ENCODE measurements at regions of chr3 and their contacts with region 1.

Region 1: DNA sequence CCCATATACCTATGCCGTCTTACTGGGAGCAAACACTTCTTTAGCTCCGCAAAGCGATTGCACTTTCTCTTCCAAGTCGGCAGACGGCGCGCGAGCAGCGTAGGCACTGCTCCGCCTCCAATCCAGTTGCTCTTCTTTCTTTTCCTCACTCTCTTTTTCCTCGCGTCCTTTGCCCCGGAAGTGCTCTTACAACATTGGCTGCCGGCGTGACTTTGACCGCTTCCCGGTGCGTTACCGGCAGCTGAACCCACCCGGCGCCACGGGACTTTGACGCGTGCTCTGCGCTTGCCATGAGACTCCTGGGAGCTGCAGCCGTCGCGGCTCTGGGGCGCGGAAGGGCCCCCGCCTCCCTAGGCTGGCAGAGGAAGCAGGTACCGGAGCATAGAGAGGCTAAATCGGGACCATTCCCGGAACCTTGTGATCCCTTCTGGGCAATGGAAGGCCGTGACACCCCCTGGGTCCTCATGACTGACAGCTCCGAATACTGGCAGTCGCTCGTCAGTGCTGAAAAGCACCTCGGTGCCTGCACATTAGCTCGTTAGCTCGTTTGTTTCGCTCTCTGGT is at the start of gene GFM1:
- DNase-seq: peak; percentile 73 to 95 (median 87)
- ATAC-seq: peak; percentile 94 to 98 (median 96)
- H3K4me3 ChIP-seq: peak within 1 kb of the TSS; percentile 74 to 99
- H3K4me3 Mint-ChIP-seq: peak within 1 kb of the TSS; percentile 89 to 97 (median 96)
- H3K27ac ChIP-seq: peak within 1 kb of the TSS; percentile 40
- H3K27ac Mint-ChIP-seq: peak within 1 kb of the TSS; percentile 88 to 94
- H3K4me1 ChIP-seq: peaks cover 6 to 19% of the 10 kb centered on the region in 2 experiments
- H3K4me1 Mint-ChIP-seq: peaks cover 38 to 53% (median 48%) of the 10 kb centered on the region in 3 donors
- H3K27me3 ChIP-seq: no peaks in the 10 kb centered on the region
- H3K27me3 Mint-ChIP-seq: no peaks in the 10 kb centered on the region
- total RNA-seq, gene GFM1: 39.0 to 46.8 (median 40.1) TPM

Region 2: GRCh38 chr3:157159762-157160657 is 1484.4 kb before region 1 on chr3 and contains the start of gene CCNL1:
- CTCF ChIA-PET with region 1: no interaction called
- POLR2A ChIA-PET with region 1: interaction called in 1 of 2 experiments, 12 read pairs
- DNase-seq: peak; percentile 90 to 99 (median 95)
- ATAC-seq: peak; percentile 76 to 83 (median 82)
- H3K4me3 ChIP-seq: peak within 1 kb of the TSS; percentile 95 to 99
- H3K4me3 Mint-ChIP-seq: peak within 1 kb of the TSS; percentile 87 to 99 (median 93)
- H3K27ac ChIP-seq: peak within 1 kb of the TSS; percentile 98
- H3K27ac Mint-ChIP-seq: peak within 1 kb of the TSS; percentile 99 to 100
- H3K4me1 ChIP-seq: peaks cover 21 to 47% of the 10 kb centered on the region in 2 experiments
- H3K4me1 Mint-ChIP-seq: peaks cover 50 to 55% (median 54%) of the 10 kb centered on the region in 3 donors
- H3K27me3 ChIP-seq: no peaks in the 10 kb centered on the region
- H3K27me3 Mint-ChIP-seq: no peaks in the 10 kb centered on the region
- total RNA-seq, gene CCNL1: 271 to 1,140 (median 276) TPM

Region 3: GRCh38 chr3:158213459-158213858 is 431.0 kb before region 1 on chr3:
- CTCF ChIA-PET with region 1: no interaction called
- POLR2A ChIA-PET with region 1: interaction called in 1 of 2 experiments, 12 read pairs
- DNase-seq: no peak
- ATAC-seq: no peak
- H3K4me3 ChIP-seq: no peak overlapping the region
- H3K4me3 Mint-ChIP-seq: no peak overlapping the region
- H3K27ac ChIP-seq: no peak overlapping the region
- H3K27ac Mint-ChIP-seq: no peak overlapping the region
- H3K4me1 ChIP-seq: no peaks in the 10 kb centered on the region
- H3K4me1 Mint-ChIP-seq: peaks cover 0 to 8% (median 3%) of the 10 kb centered on the region in 3 donors
- H3K27me3 ChIP-seq: no peaks in the 10 kb centered on the region
- H3K27me3 Mint-ChIP-seq: no peaks in the 10 kb centered on the region

Region 4: DNA sequence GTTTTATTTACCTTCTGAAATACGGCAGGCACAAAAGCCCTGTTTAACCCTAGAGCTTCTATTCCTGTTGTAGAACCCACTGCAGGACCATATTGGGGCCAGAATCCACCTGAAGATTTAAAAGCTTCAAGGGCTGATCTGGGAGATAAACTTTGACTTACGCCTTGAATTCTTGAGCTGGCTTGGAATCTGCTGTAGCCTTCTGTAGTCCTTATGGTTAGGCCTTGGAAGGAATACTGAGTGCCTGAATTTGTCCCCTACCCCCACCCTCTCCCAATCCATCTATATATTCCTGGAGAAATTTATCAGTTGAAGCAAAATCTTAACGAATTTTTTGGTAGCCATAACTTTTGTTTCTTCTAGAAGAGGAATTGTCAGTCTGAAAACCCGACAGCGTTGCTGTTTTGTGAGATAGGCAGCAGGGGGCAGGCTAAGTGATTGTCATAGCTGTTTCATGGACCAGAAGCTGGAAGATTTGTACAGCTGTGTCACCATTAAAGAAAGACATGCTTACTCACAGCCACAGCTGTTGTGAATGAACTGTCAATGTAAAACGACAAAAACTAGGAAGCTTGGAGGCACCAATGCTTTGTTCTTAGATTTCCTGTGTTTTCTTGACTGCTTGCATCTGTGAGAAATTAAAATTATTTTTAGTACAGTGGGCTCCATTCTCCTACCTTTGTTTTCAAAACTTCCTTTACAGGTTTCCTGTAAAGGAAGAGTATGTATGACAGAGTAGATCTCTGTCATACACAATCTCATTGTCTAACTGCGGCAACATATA is 15.2 kb after region 1 on chr3:
- CTCF ChIA-PET with region 1: interaction called, 22 to 59 read pairs
- POLR2A ChIA-PET with region 1: interaction called in 1 of 2 experiments, 3 read pairs
- DNase-seq: peak in 31 of 35 experiments; percentile 6 to 64 (median 35)
- ATAC-seq: peak; percentile 54 to 69 (median 68)
- H3K4me3 ChIP-seq: no peak overlapping the region
- H3K4me3 Mint-ChIP-seq: no peak overlapping the region
- H3K27ac ChIP-seq: no peak overlapping the region
- H3K27ac Mint-ChIP-seq: peak overlapping the region in 1 of 2 donors; percentile 28
- H3K4me1 ChIP-seq: no peaks in the 10 kb centered on the region
- H3K4me1 Mint-ChIP-seq: peaks cover 0 to 7% (median 5%) of the 10 kb centered on the region in 3 donors
- H3K27me3 ChIP-seq: no peaks in the 10 kb centered on the region
- H3K27me3 Mint-ChIP-seq: no peaks in the 10 kb centered on the region

Region 5: DNA sequence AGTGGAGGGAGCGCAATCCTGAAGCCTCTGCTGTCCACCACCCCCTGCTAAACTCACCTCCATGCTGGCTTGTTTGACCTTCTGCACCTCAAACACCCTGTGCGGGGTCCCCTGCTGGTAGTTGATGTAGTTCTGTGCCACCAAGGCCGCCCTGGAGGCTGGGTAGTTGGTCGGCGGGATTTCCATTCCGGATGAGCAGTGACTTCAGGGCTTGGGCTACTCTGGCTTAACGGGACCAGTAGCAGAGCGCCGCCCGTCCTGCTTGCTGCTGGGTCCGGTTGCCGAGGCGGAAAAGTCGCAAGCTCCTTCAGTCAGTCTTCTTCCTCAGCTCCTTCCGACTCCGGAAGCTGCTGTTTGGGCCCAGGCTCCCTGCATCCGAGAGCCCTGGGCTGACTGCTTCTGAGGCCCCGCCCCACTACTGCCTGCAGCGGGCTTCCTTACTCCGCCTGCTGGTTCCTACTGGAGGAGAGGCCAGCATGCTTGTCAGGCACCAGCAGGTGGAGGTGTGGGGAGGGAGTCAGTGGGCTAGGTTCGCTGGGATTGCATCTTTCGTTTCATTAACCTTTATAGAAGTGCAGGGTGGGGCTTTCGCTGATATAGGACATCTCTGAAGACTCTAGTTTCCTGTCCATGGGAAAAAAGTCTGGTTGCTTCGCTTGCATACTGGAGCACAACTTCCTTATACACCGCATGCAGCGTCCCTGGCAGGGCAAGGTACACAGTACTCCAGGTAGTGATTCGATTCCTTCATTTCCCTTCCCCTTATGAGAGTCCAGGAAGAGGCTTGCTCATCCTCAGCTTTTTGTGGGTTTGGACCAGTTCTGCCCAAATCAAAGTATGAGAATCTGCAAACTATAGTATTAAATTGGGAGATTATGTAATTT is 28.1 kb after region 1 on chr3 and contains the start of gene LXN:
- CTCF ChIA-PET with region 1: interaction called, 3 to 10 read pairs
- POLR2A ChIA-PET with region 1: interaction called in 1 of 2 experiments, 3 read pairs
- DNase-seq: peak; percentile 58 to 85 (median 74)
- ATAC-seq: peak; percentile 98 to 99 (median 99)
- H3K4me3 ChIP-seq: peak within 1 kb of the TSS; percentile 62 to 87
- H3K4me3 Mint-ChIP-seq: peak within 1 kb of the TSS; percentile 92 to 95 (median 93)
- H3K27ac ChIP-seq: peak within 1 kb of the TSS; percentile 47
- H3K27ac Mint-ChIP-seq: peak within 1 kb of the TSS; percentile 85 to 91
- H3K4me1 ChIP-seq: peaks cover 9 to 12% of the 10 kb centered on the region in 2 experiments
- H3K4me1 Mint-ChIP-seq: peaks cover 27 to 34% (median 28%) of the 10 kb centered on the region in 3 donors
- H3K27me3 ChIP-seq: no peaks in the 10 kb centered on the region
- H3K27me3 Mint-ChIP-seq: no peaks in the 10 kb centered on the region
- total RNA-seq, gene LXN: 2.5 to 6.7 (median 3.9) TPM

Region 6: DNA sequence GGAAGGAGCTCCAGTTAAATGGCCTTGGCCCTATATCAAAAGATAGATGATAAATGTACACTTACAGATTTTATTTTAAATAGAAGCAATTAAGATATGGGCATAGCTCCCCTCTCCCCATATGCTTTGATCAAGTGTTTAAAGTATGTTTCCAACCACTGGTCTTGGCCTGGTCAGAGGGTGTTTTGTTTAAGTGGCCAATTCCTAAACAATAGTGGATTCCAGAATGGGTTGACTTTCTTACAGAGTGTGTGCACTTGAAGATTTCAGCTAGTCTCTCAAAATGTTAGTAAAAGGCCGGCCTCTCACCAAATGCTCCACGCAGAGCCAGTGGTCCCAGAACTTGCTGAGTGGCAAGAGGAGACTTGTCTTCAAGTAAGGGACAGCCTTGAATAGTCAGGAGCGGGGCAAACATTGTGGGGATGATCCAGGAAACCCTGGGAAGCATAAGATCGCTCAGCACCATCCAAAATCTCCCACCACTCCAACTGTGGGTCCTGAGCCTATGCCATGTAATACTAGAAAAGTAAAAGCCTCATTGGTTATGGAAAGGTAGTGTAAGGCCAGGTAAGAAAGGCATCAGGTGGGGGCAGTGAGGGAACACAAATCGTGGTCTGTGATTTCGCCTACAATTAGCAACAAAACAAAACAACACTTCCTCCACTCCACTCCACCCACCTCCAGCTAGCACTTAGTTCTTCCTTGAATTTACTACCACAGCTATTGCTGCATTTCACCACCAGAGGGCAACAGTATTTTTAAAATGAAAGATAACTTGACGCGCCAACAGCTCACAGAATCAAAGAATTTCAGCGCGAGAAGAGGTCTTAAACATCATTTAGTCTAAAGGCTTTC is 83.0 kb after region 1 on chr3:
- CTCF ChIA-PET with region 1: interaction called, 3 to 11 read pairs
- POLR2A ChIA-PET with region 1: interaction called in 1 of 2 experiments, 3 read pairs
- DNase-seq: peak in 30 of 35 experiments; percentile 10 to 76 (median 34)
- ATAC-seq: peak; percentile 63 to 73 (median 70)
- H3K4me3 ChIP-seq: peak overlapping the region in 1 of 2 donors; percentile 8
- H3K4me3 Mint-ChIP-seq: peak overlapping the region; percentile 22 to 47 (median 41)
- H3K27ac ChIP-seq: no peak overlapping the region
- H3K27ac Mint-ChIP-seq: peak overlapping the region; percentile 55 to 68
- H3K4me1 ChIP-seq: peaks cover 5 to 25% of the 10 kb centered on the region in 2 experiments
- H3K4me1 Mint-ChIP-seq: peaks cover 39 to 57% (median 45%) of the 10 kb centered on the region in 3 donors
- H3K27me3 ChIP-seq: peaks cover 0 to 20% of the 10 kb centered on the region in 2 experiments
- H3K27me3 Mint-ChIP-seq: peaks cover 5 to 7% of the 10 kb centered on the region in 2 donors

Region 7: DNA sequence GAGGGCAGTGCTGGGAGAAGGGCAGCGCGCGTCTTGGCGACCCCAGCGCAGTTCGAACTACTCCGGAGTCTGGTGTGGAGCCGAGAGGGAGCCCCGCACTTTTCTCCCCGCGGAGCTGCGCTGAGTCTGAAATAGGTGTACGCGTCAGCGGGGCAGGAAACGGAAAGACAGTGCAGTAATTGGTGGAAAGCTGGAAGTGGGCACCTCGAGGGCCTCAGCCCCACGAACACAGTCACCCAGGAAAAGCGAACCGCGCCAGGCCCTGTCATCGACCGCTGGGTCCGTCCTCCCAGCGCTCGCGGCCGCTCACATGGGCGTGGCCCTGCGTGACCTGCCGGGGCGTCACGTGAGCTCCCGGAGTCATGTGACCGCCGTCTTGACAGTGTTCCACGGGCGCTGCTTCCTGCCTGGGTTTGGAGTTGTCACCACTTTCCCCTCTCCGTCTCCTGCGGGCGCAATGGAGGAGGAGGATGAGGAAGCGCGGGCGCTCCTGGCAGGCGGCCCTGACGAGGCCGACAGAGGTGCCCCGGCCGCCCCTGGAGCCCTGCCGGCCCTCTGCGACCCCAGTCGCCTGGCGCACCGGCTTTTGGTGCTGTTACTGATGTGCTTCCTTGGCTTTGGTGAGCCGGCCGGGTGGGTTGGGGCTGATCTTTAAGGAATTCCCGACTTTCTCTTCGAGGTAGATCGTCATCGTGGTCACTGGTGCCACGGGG is 157.4 kb after region 1 on chr3 and contains the start of gene MFSD1:
- CTCF ChIA-PET with region 1: interaction called, 4 to 16 read pairs
- POLR2A ChIA-PET with region 1: interaction called in 1 of 2 experiments, 6 read pairs
- DNase-seq: peak; percentile 69 to 92 (median 80)
- ATAC-seq: peak; percentile 88 to 90 (median 90)
- H3K4me3 ChIP-seq: peak within 1 kb of the TSS; percentile 84 to 99
- H3K4me3 Mint-ChIP-seq: peak within 1 kb of the TSS; percentile 85 to 89 (median 89)
- H3K27ac ChIP-seq: peak within 1 kb of the TSS; percentile 76
- H3K27ac Mint-ChIP-seq: peak within 1 kb of the TSS; percentile 92 to 93
- H3K4me1 ChIP-seq: peaks cover 14 to 18% of the 10 kb centered on the region in 2 experiments
- H3K4me1 Mint-ChIP-seq: peaks cover 38 to 41% (median 40%) of the 10 kb centered on the region in 3 donors
- H3K27me3 ChIP-seq: no peaks in the 10 kb centered on the region
- H3K27me3 Mint-ChIP-seq: no peaks in the 10 kb centered on the region
- total RNA-seq, gene MFSD1: 17.7 to 28.3 (median 25.5) TPM